ENCODE measurements at regions of chr6 and their contacts with region 1.

Region 1: DNA sequence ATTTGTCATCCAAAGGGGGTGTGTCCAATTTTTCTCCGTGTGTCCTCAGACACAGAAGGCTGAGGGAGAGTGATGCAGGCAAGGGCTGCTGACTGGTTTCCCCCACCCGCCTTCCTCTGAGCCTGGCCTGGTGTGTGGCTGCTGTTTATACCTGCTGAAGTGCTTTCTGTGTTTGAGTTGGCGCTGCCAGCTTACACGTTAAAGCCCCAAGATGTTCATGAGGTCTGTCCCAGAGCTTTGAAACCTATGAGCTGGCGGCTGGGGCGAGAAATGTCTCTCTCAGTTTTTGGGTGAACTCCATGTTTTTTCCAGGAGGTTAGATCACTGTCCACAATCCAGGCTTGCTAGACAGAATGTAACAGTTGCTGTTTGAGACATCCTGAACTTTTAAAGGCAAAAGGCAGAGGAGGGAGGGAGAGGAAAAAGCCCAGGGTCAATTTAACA is 69.0 kb upstream of the CCN2 start:
- DNase-seq: peak; percentile 95
- H3K4me3 ChIP-seq: peak overlapping the region in 2 of 4 donors; percentile 1 to 34
- H3K27ac ChIP-seq: peak overlapping the region; percentile 80 to 90 (median 86)
- H3K4me1 ChIP-seq: peaks cover 0 to 47% (median 36%) of the 10 kb centered on the region in 4 donors
- H3K27me3 ChIP-seq: no peaks in the 10 kb centered on the region
- CTCF ChIP-seq: no peak
- EP300 ChIP-seq: peak; percentile 84
- POLR2A ChIP-seq: no peak

Region 2: DNA sequence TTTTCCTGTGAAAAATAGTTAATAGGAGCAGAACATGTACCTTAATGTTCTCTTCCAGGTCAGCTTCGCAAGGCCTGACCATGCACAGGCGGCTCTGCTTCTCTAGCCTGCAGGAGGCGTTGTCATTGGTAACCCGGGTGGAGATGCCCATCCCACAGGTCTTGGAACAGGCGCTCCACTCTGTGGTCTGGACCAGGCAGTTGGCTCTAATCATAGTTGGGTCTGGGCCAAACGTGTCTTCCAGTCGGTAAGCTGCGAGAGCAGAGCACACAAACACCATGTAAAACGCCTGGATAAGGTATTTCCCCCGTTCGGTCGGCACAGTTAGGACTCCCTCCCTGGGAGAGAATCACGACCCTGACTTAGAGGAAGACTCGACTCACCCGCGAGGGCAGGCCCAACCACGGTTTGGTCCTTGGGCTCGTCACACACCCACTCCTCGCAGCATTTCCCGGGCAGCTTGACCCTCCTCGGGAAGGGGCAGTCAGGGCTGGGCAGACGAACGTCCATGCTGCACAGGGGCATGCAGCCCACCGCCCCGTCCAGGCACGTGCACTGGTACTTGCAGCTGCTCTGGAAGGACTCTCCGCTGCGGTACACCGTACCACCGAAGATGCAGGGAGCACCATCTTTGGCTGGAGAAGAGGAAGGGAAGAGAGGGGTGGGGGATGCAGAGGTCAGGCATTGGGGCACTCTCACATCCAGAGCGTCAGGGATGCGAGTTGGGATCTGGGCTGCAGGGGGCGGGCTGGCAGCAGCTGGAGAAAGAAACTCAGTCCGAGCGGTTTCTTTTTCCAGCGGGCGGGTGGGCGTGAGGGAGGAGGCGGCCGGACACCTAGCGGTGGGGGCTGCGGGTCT is 70.0 kb before region 1 on chr6:
- intact Hi-C with region 1: loop called (anchors 2 kb)
- DNase-seq: no peak
- H3K4me3 ChIP-seq: peak overlapping the region; percentile 86 to 94 (median 90)
- H3K27ac ChIP-seq: peak overlapping the region; percentile 96 to 97 (median 97)
- H3K4me1 ChIP-seq: peaks cover 16 to 49% (median 44%) of the 10 kb centered on the region in 4 donors
- H3K27me3 ChIP-seq: no peaks in the 10 kb centered on the region
- CTCF ChIP-seq: peak; percentile 51 to 67 (median 60)
- EP300 ChIP-seq: no peak
- POLR2A ChIP-seq: no peak

Region 3: DNA sequence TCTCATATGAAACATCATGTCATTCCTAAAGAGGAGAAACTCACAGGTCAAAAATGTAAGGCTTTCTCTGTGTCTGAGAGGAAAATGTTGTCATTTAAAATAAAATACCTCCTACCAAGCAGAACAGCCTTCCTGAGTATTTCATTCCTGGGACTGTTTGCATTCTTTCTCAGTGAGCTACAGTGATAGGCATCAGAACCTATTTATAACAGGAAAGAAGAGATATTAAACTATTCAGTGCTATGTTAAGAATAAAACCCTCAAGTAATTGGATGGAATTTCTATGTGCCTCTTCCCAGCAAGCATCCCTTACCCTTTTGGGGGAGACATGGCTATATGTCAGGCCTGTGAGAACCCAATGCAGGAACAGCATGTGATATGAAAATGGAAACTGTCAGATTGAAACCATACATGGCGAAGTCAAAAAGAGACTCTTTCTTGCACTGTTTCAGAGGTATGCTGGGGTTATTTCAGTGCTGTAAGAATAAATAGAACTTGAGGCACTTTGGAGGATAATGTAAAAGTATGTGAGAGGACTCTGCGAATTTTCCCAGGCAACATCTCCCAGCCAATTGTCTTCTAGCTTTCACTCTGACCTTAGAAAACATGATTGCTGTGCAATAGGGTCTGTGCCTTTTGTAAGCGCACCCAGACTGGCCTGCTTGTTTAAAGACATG is 64.8 kb after region 1 on chr6:
- intact Hi-C with region 1: loop called (anchors 5 kb)
- DNase-seq: no peak
- H3K4me3 ChIP-seq: peak overlapping the region in 3 of 4 donors; percentile 16 to 37 (median 30)
- H3K27ac ChIP-seq: peak overlapping the region; percentile 82 to 88 (median 84)
- H3K4me1 ChIP-seq: peaks cover 6 to 48% (median 32%) of the 10 kb centered on the region in 4 donors
- H3K27me3 ChIP-seq: no peaks in the 10 kb centered on the region
- CTCF ChIP-seq: no peak
- EP300 ChIP-seq: no peak
- POLR2A ChIP-seq: no peak

Region 4: DNA sequence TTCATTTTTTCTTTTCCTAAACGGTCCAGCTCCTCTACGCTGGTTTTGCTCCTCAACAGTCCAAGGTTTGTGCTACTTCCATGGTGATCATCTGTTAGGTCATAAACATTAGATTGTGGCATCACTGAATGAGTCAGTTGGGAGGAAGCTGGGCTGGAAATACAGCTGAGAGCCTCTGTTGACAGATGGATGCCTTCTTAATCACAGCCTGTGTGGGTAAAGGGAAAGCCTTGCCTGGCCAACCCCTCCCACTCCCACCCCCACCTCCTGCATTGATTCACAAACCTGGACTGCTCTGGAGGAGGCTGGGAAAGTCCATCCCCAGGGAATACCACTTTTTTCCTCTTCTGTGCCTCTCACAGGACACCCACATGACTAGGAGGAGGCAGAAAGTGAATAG is 111.6 kb after region 1 on chr6:
- intact Hi-C with region 1: loop called (anchors 10 kb)
- DNase-seq: no peak
- H3K4me3 ChIP-seq: no peak overlapping the region
- H3K27ac ChIP-seq: peak overlapping the region; percentile 84 to 90 (median 86)
- H3K4me1 ChIP-seq: peaks cover 35 to 44% (median 42%) of the 10 kb centered on the region in 4 donors
- H3K27me3 ChIP-seq: no peaks in the 10 kb centered on the region
- CTCF ChIP-seq: no peak
- EP300 ChIP-seq: no peak
- POLR2A ChIP-seq: no peak

Region 5: GRCh38 chr6:133551847-133552341 is 1531.7 kb after region 1 on chr6:
- intact Hi-C with region 1: no loop called
- DNase-seq: no peak
- H3K4me3 ChIP-seq: no peak overlapping the region
- H3K27ac ChIP-seq: peak overlapping the region; percentile 65 to 67 (median 66)
- H3K4me1 ChIP-seq: peaks cover 0 to 40% (median 36%) of the 10 kb centered on the region in 4 donors
- H3K27me3 ChIP-seq: no peaks in the 10 kb centered on the region
- CTCF ChIP-seq: no peak
- EP300 ChIP-seq: no peak
- POLR2A ChIP-seq: no peak

Measured in esophagus muscularis mucosa (tissue), 4 donors.